Mammary epithelial cell (primary cell): ENCODE measurements at regions of chr1 and their contacts with region 1.

Region 1: GRCh38 chr1:179129702-179130473 is 48.0 kb downstream of the TOR3A start:
- DNase-seq: peak; percentile 42
- H3K4me3 ChIP-seq: no peak overlapping the region
- H3K27ac ChIP-seq: peak overlapping the region; percentile 11
- H3K4me1 ChIP-seq: peaks cover 39% of the 10 kb centered on the region
- H3K27me3 ChIP-seq: no peaks in the 10 kb centered on the region
- CTCF ChIP-seq: no peak

Region 2: GRCh38 chr1:179142889-179143299 is 13.0 kb after region 1 on chr1:
- CTCF ChIA-PET with region 1: no interaction called
- dilution Hi-C with region 1: no loop called
- in situ Hi-C with region 1: no loop called
- intact Hi-C with region 1: loop called (anchors 1 kb)
- DNase-seq: peak; percentile 97
- H3K4me3 ChIP-seq: peak overlapping the region; percentile 68 to 100 (median 82)
- H3K27ac ChIP-seq: peak overlapping the region; percentile 100
- H3K4me1 ChIP-seq: peaks cover 30% of the 10 kb centered on the region
- H3K27me3 ChIP-seq: no peaks in the 10 kb centered on the region
- CTCF ChIP-seq: no peak

Region 3: GRCh38 chr1:179175011-179175841 is 45.3 kb after region 1 on chr1:
- CTCF ChIA-PET with region 1: no interaction called
- dilution Hi-C with region 1: loop called (anchors 5 kb)
- in situ Hi-C with region 1: no loop called
- intact Hi-C with region 1: no loop called
- DNase-seq: peak; percentile 81
- H3K4me3 ChIP-seq: no peak overlapping the region
- H3K27ac ChIP-seq: peak overlapping the region; percentile 75
- H3K4me1 ChIP-seq: peaks cover 24% of the 10 kb centered on the region
- H3K27me3 ChIP-seq: no peaks in the 10 kb centered on the region
- CTCF ChIP-seq: no peak